Sciatic nerve (tissue), 2 donors: ENCODE measurements at regions of chr19 and their contacts with region 1.

Region 1: DNA sequence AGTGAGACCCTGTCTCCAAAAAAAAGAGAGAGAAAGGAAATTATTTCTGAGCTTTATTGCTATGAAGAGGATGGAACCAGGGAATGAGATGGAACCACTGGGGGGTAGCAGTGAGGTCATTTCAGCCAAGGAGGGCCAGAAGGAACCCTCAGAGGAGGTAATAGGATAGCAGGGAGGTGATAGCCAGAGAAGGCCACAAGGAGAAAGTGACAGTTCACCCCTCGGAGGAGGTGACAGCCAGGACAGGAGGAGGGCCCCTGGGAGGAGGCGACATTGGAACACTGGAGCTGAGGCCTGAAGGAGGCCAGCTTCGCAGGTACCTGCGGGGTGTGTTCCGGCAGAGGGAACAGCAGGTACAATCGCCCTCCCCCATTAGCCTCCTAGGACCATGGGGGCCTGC is 675 bp upstream of the PGPEP1 start:
- DNase-seq: no peak
- ATAC-seq: no peak

Region 2: DNA sequence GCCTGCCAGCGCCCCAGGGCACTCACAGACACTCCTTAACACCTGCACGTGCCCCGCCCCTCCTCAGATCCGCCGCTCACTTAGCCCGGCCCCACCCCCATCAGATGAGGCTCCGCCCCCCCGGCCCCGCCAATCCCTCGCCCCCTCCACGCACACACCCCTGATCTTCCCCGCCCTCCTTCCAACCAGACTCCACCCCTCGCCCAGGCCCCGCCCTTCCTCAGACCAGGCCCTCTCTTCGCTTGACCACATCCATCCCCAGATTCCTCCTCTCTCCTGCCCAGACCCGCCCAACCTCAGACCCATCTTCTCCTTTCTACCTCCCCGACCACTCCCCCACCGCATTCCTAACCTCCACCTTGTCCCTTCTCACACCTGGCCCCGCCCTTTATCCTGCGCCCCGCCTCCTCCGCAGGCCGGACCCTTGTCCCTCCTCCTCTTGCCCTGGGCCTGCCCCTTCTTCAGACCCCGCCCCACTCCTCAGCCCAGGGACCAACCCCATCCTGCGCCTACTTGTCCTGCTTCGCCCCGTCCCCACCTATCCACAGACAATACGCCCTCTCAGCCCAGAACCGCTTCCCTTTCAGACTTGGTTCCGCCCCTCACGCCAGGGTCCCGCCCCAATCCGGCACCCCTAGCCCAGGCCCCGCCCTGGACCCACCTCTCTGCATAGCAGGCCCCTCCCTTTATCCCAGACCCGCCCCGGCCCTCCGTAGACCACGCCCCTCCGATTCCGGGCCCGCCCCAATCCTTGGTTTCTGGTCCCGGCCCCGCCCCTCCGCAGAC is 296.7 kb after region 1 on chr19:
- intact Hi-C with region 1: loop called (anchors 10 kb)
- DNase-seq: peak; percentile 100
- ATAC-seq: peak; percentile 97